WTC11 (cell line): ENCODE measurements at regions of chr19 and their contacts with region 1.

Region 1: GRCh38 chr19:49301165-49301865 is 23.7 kb downstream of the SLC6A16 start:
- DNase-seq: peak; percentile 93
- ATAC-seq: peak; percentile 100
- H3K4me3 Mint-ChIP-seq: no peak overlapping the region
- H3K27ac Mint-ChIP-seq: no peak overlapping the region
- H3K4me1 Mint-ChIP-seq: peaks cover 2% of the 10 kb centered on the region; the same call in 1 of the 2 replicates
- H3K27me3 Mint-ChIP-seq: peaks cover 9% of the 10 kb centered on the region
- CTCF ChIP-seq: peak; percentile 97

Region 2: DNA sequence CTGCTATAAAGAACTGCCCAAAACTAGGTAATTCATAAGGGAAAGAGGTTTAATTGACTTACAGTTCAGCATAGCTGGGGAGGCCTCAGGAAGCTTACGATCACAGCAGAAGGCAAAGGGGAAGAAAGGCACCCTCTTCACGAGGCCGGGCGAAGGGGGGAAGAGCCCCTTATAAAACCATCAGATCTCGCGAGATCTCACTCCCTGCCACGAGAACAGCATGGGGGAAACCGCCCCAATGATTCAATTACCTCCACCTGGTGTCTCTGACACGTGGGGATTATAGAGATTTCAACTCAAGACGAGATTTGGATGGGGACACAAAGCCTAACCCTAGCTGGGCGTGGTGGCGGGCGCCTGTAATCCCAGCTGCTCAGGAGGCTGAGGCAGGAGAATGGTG is 19.1 kb before region 1 on chr19:
- CTCF ChIA-PET with region 1: interaction called, 10 read pairs
- POLR2A ChIA-PET with region 1: no interaction called
- DNase-seq: no peak
- ATAC-seq: no peak
- H3K4me3 Mint-ChIP-seq: no peak overlapping the region
- H3K27ac Mint-ChIP-seq: no peak overlapping the region
- H3K4me1 Mint-ChIP-seq: no peaks in the 10 kb centered on the region
- H3K27me3 Mint-ChIP-seq: peaks cover 12% of the 10 kb centered on the region
- CTCF ChIP-seq: no peak

Region 3: DNA sequence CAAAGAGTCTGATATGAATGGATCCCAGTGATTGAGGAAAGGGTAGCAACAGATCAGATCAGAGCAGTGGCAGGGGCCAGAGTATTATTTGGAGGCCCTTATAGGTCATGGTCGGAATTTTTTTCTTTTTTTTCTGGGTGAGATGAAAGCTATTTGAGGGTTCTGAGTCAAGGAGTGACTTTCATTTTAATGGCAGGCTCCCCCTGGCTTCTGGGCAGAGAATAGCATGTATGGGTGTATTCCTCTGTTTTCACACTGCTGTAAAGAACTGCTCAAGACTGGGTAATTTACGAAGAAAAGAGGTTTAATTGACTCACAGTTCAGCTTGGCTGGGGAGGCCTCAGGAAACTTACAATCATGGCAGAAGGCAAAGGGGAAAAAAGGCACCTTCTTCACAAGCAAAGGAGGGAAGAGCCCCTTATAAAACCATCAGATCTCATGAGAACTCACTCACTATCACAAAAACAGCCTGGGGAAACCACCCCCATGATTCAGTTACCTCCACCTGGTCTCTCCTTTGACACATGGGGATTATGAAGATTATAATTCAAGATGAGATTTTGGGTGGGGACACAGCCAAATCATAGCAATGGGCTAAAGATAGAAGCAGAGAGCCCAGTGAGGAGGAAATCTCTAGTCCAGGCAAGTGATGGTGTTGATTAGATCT is 26.7 kb after region 1 on chr19:
- CTCF ChIA-PET with region 1: interaction called, 13 read pairs
- POLR2A ChIA-PET with region 1: no interaction called
- DNase-seq: peak; percentile 62
- ATAC-seq: peak; percentile 79
- H3K4me3 Mint-ChIP-seq: no peak overlapping the region
- H3K27ac Mint-ChIP-seq: no peak overlapping the region
- H3K4me1 Mint-ChIP-seq: peaks cover 2% of the 10 kb centered on the region; the same call in 1 of the 2 replicates
- H3K27me3 Mint-ChIP-seq: peaks cover 22% of the 10 kb centered on the region
- CTCF ChIP-seq: peak; percentile 67

Region 4: DNA sequence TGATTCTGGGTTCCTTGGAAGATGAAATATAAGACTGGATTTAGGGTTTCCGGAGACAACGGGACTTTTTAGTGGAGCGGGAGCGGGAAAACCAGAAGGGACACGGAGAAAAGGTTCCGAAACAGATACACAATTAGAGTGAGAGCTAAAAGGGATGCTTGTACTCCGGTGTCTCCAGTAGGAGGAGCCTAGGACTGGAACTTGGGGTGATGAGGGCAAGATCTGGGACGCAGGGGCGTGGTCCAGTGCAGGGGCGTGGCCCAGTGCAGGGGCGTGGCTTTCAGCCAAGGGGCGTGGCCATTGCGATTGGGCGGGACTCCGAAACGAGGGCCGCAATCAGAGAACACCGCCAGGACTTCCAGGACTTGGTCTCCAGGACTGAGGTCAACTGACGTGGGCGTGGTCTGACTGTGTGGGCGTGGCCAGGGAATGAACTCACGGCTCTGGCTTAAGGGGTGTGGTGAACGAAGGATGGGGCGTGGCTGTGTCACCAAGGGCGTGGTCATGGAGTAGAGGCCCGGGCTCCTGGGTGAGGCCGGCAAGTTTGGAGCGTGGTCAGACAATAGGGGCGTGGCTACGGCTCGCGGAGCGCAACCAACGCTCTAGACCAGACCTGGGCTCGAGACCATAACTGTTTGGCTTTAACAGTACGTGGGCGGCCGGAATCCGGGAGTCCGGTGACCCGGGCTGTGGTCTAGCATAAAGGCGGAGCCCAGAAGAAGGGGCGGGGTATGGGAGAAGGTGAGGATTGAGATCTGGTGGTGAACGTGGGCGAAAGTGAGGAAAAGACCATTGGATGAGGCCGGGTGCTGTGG is 62.2 kb after region 1 on chr19 and contains the start of gene DKKL1:
- CTCF ChIA-PET with region 1: interaction called, 10 read pairs
- POLR2A ChIA-PET with region 1: no interaction called
- DNase-seq: peak; percentile 100
- ATAC-seq: peak; percentile 88
- H3K4me3 Mint-ChIP-seq: no peak within 1 kb of the TSS
- H3K27ac Mint-ChIP-seq: no peak within 1 kb of the TSS
- H3K4me1 Mint-ChIP-seq: peaks cover 8% of the 10 kb centered on the region
- H3K27me3 Mint-ChIP-seq: peaks cover 5% of the 10 kb centered on the region
- CTCF ChIP-seq: no peak
- total RNA-seq, gene DKKL1: 2.4 to 3.0 TPM (median 2.9 TPM) in 3 replicates

Region 5: GRCh38 chr19:49502866-49503581 is 201.7 kb after region 1 on chr19:
- CTCF ChIA-PET with region 1: no interaction called
- POLR2A ChIA-PET with region 1: no interaction called
- DNase-seq: no peak
- ATAC-seq: no peak
- H3K4me3 Mint-ChIP-seq: no peak overlapping the region
- H3K27ac Mint-ChIP-seq: no peak overlapping the region
- H3K4me1 Mint-ChIP-seq: peaks cover 31% of the 10 kb centered on the region
- H3K27me3 Mint-ChIP-seq: no peaks in the 10 kb centered on the region; the same call in 1 of the 2 replicates
- CTCF ChIP-seq: peak; percentile 29; the same call in 1 of the 2 replicates